ENCODE measurements at regions of chr2 and their contacts with region 1.

Region 1: GRCh38 chr2:98835831-98836385 is 100.1 kb downstream of the CRACDL start:
- DNase-seq: peak in 8 of 9 experiments; percentile 34 to 90 (median 67)
- ATAC-seq: peak; percentile 82
- H3K4me3 ChIP-seq: no peak overlapping the region
- H3K4me3 Mint-ChIP-seq: peak overlapping the region; percentile 55
- H3K27ac ChIP-seq: peak overlapping the region; percentile 25 to 61
- H3K27ac Mint-ChIP-seq: peak overlapping the region; percentile 93
- H3K4me1 ChIP-seq: peaks cover 26% of the 10 kb centered on the region
- H3K4me1 Mint-ChIP-seq: peaks cover 42% of the 10 kb centered on the region
- H3K27me3 ChIP-seq: no peaks in the 10 kb centered on the region
- H3K27me3 Mint-ChIP-seq: no peaks in the 10 kb centered on the region
- CTCF ChIP-seq: no peak

Region 2: DNA sequence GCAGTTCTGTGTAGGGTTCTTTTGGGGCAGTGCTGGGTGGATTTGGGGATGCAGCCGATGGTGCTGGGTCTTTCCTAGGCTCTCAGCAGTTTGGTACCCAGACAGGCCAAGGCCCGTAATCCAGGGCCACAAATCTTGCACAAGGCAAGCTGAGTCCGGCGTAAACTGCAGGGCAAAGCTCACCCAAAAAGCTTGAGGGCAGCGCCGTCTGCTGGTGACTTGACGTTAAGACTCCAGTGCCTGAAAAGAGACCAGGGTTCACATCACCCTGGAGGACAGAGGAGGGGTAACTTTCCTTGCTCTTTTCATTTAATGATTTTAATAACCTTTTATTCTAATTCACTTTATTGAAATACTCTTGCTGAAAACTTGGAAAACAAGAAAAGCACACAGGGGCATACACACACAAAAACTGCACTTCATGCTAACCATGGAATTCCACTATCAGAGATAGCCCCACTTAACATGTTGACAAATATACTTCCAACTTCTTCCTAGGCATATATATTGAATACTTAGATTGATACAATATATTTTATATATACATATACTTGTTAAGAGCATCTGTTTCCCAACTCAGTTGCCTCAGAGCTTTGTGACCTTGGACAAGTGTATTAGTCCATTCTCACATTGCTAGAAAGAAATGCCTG is 450.7 kb before region 1 on chr2:
- CTCF ChIA-PET with region 1: no interaction called
- POLR2A ChIA-PET with region 1: no interaction called
- intact Hi-C with region 1: loop called in 1 of 2 experiments (anchors 1 kb)
- DNase-seq: peak; percentile 50 to 78 (median 70)
- ATAC-seq: peak; percentile 78
- H3K4me3 ChIP-seq: no peak overlapping the region
- H3K4me3 Mint-ChIP-seq: no peak overlapping the region
- H3K27ac ChIP-seq: no peak overlapping the region
- H3K27ac Mint-ChIP-seq: no peak overlapping the region
- H3K4me1 ChIP-seq: no peaks in the 10 kb centered on the region
- H3K4me1 Mint-ChIP-seq: no peaks in the 10 kb centered on the region
- H3K27me3 ChIP-seq: no peaks in the 10 kb centered on the region
- H3K27me3 Mint-ChIP-seq: peaks cover 6% of the 10 kb centered on the region
- CTCF ChIP-seq: peak; percentile 88

Region 3: DNA sequence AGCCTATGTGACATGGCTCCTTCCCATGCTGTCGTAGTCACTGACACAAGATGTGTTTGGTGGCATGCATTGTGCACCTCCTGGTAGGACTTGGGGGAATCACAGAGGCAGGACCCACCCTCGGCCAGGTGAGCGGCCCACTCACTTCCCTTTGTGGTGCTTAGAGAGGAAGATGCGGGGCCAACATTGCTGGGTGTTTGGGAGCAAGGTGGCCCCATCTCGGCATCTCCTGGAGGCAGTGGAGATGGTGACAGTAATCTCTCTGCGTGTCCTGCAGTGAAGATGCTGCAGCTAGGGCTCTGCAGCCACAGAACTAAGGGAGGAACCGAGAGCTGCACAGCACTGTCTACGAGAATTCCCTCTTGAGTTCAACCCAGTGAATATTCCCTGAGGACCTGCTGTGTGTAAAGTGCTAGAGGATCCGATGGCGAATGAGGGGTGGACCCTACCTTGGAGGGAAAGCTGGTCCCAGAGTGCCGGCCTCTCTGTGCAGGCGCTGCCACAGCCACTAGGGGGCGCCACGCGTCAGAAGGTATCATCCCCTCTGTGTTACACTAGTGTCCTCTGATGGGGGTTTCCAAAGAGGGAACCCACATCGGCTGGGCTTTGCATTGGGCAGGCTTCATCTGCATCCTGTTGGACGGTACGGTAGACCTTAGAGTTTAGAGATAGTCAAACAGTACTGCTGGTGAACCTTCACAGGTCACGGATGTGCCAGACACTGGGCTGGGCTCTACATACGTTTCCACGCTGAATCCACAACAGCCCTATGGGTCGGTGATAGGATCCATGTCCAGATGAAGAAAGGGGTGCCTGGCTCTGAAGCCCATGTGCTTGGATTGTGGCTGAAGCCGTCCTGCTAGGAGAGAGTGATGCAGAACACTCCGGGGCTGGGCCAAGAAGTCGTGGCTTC is 266.8 kb before region 1 on chr2:
- CTCF ChIA-PET with region 1: interaction called, 23 read pairs
- POLR2A ChIA-PET with region 1: no interaction called
- intact Hi-C with region 1: loop called (anchors 1 kb)
- DNase-seq: peak; percentile 49 to 84 (median 71)
- ATAC-seq: peak; percentile 81
- H3K4me3 ChIP-seq: no peak overlapping the region
- H3K4me3 Mint-ChIP-seq: no peak overlapping the region
- H3K27ac ChIP-seq: peak overlapping the region in 1 of 2 experiments; percentile 14
- H3K27ac Mint-ChIP-seq: peak overlapping the region; percentile 75
- H3K4me1 ChIP-seq: no peaks in the 10 kb centered on the region
- H3K4me1 Mint-ChIP-seq: no peaks in the 10 kb centered on the region
- H3K27me3 ChIP-seq: no peaks in the 10 kb centered on the region
- H3K27me3 Mint-ChIP-seq: no peaks in the 10 kb centered on the region
- CTCF ChIP-seq: peak; percentile 91

Region 4: DNA sequence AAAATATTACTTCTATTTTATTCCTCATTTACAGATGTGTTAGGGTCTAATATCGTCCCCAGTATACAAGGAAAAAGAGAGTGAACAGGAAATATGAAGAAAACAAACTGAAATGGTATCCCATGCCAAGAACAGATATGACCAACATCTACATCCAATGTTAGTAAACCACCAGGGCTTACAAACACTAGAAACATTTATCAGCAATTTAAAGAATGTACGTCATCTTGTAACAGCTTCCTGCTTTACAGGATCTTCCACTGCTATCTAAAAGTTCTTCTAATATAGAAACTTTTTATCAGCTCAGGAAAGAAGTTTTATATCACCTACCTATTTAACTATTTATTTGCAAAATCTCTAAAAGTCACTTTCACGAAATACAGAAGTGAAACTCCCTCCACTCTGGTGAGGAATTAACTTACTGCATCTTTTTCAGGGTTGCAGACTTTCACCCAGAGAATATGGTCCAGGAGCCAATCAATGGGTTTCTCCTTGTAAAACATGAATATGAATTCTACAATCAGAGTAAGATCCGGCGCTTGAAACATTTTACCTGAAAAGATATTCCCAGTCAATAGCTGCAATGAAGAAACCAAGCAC is 192.3 kb before region 1 on chr2:
- CTCF ChIA-PET with region 1: interaction called, 46 read pairs
- POLR2A ChIA-PET with region 1: no interaction called
- intact Hi-C with region 1: no loop called
- DNase-seq: no peak
- ATAC-seq: no peak
- H3K4me3 ChIP-seq: no peak overlapping the region
- H3K4me3 Mint-ChIP-seq: no peak overlapping the region
- H3K27ac ChIP-seq: no peak overlapping the region
- H3K27ac Mint-ChIP-seq: peak overlapping the region; percentile 72
- H3K4me1 ChIP-seq: peaks cover 5% of the 10 kb centered on the region
- H3K4me1 Mint-ChIP-seq: peaks cover 27% of the 10 kb centered on the region
- H3K27me3 ChIP-seq: no peaks in the 10 kb centered on the region
- H3K27me3 Mint-ChIP-seq: no peaks in the 10 kb centered on the region
- CTCF ChIP-seq: no peak

Region 5: DNA sequence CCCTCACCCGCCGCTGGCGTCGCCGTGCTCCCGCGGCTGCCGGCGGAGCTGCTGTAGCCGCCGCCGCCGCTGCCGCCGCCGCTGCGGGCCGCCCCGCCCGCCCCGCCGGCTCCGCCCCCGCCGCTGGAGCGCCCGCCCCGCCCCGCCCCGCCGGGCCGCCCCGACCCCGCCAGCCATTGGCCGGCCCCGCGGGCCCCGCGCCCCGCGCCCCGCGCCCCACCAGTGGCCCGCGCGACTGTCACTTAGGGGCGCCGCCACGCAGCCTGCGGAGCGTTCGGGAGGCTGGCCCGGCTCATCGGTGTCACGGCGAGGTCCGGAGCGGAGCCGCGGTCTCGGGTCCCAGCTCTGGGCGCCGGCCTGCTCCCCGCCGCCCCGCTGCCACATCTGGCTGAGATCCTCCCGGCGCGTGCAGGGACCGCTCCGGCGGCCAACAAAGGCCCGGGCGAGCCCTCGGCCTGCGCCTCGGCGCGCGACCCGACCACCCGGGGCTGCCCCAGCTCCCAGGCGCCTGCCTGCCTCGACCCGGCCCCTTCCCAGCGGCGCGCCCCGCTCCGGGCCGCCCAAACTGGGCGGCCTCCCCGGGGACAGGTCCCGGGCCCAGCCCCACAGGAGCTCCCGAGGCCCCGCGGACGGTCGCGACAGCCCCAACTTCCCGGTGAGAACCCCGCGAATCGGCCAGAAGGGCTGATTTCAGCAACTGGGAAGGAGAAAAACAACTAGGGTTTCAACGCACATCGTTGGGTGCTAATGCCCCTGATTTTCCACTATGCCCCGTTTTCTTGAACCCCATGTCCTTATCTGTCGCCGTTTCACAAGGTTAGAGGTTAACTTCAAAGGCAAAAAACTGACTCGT is 104.6 kb before region 1 on chr2 and contains the start of gene MGAT4A:
- CTCF ChIA-PET with region 1: interaction called, 6 read pairs
- POLR2A ChIA-PET with region 1: interaction called, 4 read pairs
- intact Hi-C with region 1: loop called (anchors 1 to 2 kb)
- DNase-seq: peak; percentile 62 to 90 (median 82)
- ATAC-seq: peak; percentile 76
- H3K4me3 ChIP-seq: peak within 1 kb of the TSS; percentile 80 to 93
- H3K4me3 Mint-ChIP-seq: peak within 1 kb of the TSS; percentile 93
- H3K27ac ChIP-seq: peak within 1 kb of the TSS; percentile 82 to 83
- H3K27ac Mint-ChIP-seq: peak within 1 kb of the TSS; percentile 97
- H3K4me1 ChIP-seq: peaks cover 49% of the 10 kb centered on the region
- H3K4me1 Mint-ChIP-seq: peaks cover 59% of the 10 kb centered on the region
- H3K27me3 ChIP-seq: no peaks in the 10 kb centered on the region
- H3K27me3 Mint-ChIP-seq: no peaks in the 10 kb centered on the region
- CTCF ChIP-seq: no peak
- total RNA-seq, gene MGAT4A: 226 to 229 TPM

Region 6: GRCh38 chr2:98869940-98870263 is 34.0 kb after region 1 on chr2:
- CTCF ChIA-PET with region 1: no interaction called
- POLR2A ChIA-PET with region 1: no interaction called
- intact Hi-C with region 1: no loop called
- DNase-seq: no peak
- ATAC-seq: no peak
- H3K4me3 ChIP-seq: peak overlapping the region in 1 of 2 experiments; percentile 12
- H3K4me3 Mint-ChIP-seq: peak overlapping the region; percentile 54
- H3K27ac ChIP-seq: no peak overlapping the region
- H3K27ac Mint-ChIP-seq: no peak overlapping the region
- H3K4me1 ChIP-seq: no peaks in the 10 kb centered on the region
- H3K4me1 Mint-ChIP-seq: no peaks in the 10 kb centered on the region
- H3K27me3 ChIP-seq: no peaks in the 10 kb centered on the region
- H3K27me3 Mint-ChIP-seq: no peaks in the 10 kb centered on the region
- CTCF ChIP-seq: no peak

Region 7: GRCh38 chr2:99066075-99066958 is 230.4 kb after region 1 on chr2:
- CTCF ChIA-PET with region 1: no interaction called
- POLR2A ChIA-PET with region 1: no interaction called
- intact Hi-C with region 1: loop called (anchors 1 to 10 kb)
- DNase-seq: peak in 3 of 9 experiments; percentile 29 to 75 (median 45)
- ATAC-seq: peak; percentile 93
- H3K4me3 ChIP-seq: no peak overlapping the region
- H3K4me3 Mint-ChIP-seq: no peak overlapping the region
- H3K27ac ChIP-seq: peak overlapping the region in 1 of 2 experiments; percentile 70
- H3K27ac Mint-ChIP-seq: no peak overlapping the region
- H3K4me1 ChIP-seq: peaks cover 13% of the 10 kb centered on the region
- H3K4me1 Mint-ChIP-seq: peaks cover 2% of the 10 kb centered on the region
- H3K27me3 ChIP-seq: no peaks in the 10 kb centered on the region
- H3K27me3 Mint-ChIP-seq: no peaks in the 10 kb centered on the region
- CTCF ChIP-seq: no peak

Measured in CD8-positive, alpha-beta T cell (primary cell).